ENCODE measurements at regions of chr11 and their contacts with region 1.

Region 1: DNA sequence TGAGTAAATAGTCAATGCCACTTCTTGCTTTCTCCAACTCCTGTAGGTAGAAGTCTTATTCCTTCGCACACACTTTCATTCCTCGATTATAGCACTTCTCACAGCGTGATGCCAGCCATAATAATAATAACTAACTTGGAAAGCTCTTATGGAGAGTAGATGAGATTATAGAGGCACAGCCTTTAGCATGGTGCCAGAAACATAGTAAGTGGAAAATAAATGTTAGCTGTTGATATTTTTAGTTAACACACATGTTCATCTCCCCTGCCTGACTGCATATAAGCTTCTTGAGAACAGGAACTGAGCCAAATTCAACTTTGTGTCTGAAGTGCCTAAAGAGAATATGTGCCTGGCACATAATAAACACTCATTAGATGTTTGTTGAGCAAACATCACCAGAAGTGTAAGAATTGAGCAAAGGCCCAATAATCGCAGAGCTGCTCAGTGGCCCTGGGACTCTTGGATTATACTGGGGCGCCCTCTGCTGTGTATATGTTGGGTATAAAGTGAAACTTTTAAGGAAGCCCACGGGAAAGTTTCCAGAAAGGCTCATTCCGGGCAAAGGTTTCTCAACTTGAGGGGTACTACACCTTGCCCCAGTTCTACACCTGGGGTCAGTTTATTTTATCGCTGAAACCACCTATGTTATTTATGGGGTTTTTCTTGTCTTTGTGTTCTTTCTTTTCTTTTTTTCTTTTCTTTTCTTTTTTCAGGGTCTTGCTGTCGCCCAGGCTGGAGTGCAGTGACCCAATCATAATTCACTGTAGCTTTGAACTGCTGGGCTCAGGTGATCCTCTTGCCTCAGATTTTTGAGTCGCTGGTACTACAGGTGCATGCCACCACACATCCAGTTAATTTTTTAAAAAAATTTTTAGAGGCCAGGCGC is 22.3 kb downstream of the SLN start:
- DNase-seq: peak; percentile 81
- ATAC-seq: peak; percentile 68
- H3K4me3 Mint-ChIP-seq: no peak overlapping the region
- H3K27ac Mint-ChIP-seq: no peak overlapping the region
- H3K4me1 Mint-ChIP-seq: no peaks in the 10 kb centered on the region
- H3K27me3 Mint-ChIP-seq: peaks cover 19% of the 10 kb centered on the region
- CTCF ChIP-seq: peak; percentile 66

Region 2: DNA sequence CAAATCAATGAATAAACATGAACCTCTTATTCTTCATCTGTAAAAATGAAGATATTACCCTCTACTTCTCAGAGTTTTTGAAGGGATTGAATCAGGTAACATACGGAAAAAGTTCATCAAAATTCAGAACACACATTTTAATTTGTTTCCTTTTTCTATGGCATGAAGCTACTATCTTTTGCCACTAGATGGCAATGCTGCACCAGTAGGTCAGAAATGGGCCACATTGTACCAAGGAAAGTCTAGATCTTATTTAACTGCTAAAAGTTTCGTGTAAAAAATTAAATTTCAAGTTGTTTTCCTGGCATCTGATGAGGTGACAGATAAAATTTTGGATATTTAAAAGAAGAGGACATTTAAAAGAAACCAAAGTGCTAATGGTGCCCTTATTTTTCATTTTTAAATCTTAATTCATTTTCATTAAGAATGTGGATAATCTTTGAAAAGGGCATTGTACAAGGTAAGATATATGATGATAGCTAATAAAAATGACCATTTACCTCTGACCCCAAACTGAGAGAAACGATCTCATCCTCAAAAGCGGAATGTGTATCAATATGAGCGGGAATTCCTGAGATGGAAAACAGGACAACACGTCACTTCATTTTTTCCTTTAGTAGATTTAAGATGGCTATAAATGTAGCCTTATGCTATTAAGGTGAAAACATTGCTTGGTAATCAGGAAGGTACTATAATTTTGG is 140.2 kb before region 1 on chr11:
- CTCF ChIA-PET with region 1: interaction called, 57 read pairs
- POLR2A ChIA-PET with region 1: no interaction called
- intact Hi-C with region 1: no loop called
- DNase-seq: peak; percentile 38
- ATAC-seq: peak; percentile 65
- H3K4me3 Mint-ChIP-seq: no peak overlapping the region
- H3K27ac Mint-ChIP-seq: no peak overlapping the region
- H3K4me1 Mint-ChIP-seq: peaks cover 10% of the 10 kb centered on the region
- H3K27me3 Mint-ChIP-seq: no peaks in the 10 kb centered on the region
- CTCF ChIP-seq: peak; percentile 84

Region 3: GRCh38 chr11:107565219-107565937 is 124.2 kb before region 1 on chr11 and contains the start of gene ALKBH8:
- CTCF ChIA-PET with region 1: interaction called, 47 read pairs
- POLR2A ChIA-PET with region 1: no interaction called
- intact Hi-C with region 1: loop called (anchors 5 kb)
- DNase-seq: peak; percentile 91
- ATAC-seq: peak; percentile 89
- H3K4me3 Mint-ChIP-seq: peak within 1 kb of the TSS; percentile 99
- H3K27ac Mint-ChIP-seq: peak within 1 kb of the TSS; percentile 100
- H3K4me1 Mint-ChIP-seq: peaks cover 62% of the 10 kb centered on the region
- H3K27me3 Mint-ChIP-seq: no peaks in the 10 kb centered on the region
- CTCF ChIP-seq: no peak
- total RNA-seq, gene ALKBH8: 13.3 to 13.4 TPM

Region 4: GRCh38 chr11:107577346-107577711 is 112.2 kb before region 1 on chr11:
- CTCF ChIA-PET with region 1: interaction called, 42 read pairs
- POLR2A ChIA-PET with region 1: no interaction called
- intact Hi-C with region 1: loop called (anchors 2 kb)
- DNase-seq: no peak
- ATAC-seq: no peak
- H3K4me3 Mint-ChIP-seq: no peak overlapping the region
- H3K27ac Mint-ChIP-seq: no peak overlapping the region
- H3K4me1 Mint-ChIP-seq: peaks cover 3% of the 10 kb centered on the region
- H3K27me3 Mint-ChIP-seq: peaks cover 10% of the 10 kb centered on the region
- CTCF ChIP-seq: no peak

Region 5: DNA sequence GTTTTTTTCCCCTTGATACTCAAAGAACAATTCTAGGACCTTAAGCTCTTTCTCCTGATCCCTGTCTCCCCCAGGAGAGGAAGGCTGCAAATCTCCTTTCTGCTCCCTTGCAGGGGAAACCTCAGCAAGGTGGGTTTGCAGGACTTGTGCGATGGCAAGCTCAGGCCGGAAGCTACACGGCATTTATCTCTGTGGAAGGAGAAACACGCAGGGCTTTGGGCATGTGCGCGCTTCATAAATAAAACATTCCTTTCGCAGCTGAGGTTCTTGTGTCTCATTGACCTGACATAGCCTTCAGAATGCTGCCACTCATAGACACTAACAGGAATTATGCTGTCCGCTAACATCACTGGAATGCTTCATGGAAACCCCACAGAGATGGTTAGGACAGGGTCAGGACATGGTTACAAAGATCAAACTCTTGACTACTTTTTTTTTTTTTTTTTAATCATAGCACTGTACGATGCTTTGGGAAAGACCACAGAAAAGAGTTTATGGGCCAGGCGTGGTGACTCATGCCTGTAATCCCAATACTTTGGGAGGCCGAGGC is 20.3 kb before region 1 on chr11:
- CTCF ChIA-PET with region 1: interaction called, 13 read pairs
- POLR2A ChIA-PET with region 1: no interaction called
- intact Hi-C with region 1: no loop called
- DNase-seq: no peak
- ATAC-seq: no peak
- H3K4me3 Mint-ChIP-seq: no peak overlapping the region
- H3K27ac Mint-ChIP-seq: no peak overlapping the region
- H3K4me1 Mint-ChIP-seq: no peaks in the 10 kb centered on the region
- H3K27me3 Mint-ChIP-seq: peaks cover 3% of the 10 kb centered on the region
- CTCF ChIP-seq: no peak

Measured in activated CD8-positive, alpha-beta T cell treated with anti-CD3 and anti-CD28 coated beads for 36 hours (primary cell).